ENCODE measurements at regions of chr10 and their contacts with region 1.

Region 1: GRCh38 chr10:92848441-92849233 is at the start of gene EXOC6:
- DNase-seq: peak; percentile 75 to 95 (median 85)
- ATAC-seq: peak; percentile 87
- H3K4me3 ChIP-seq: peak within 1 kb of the TSS; percentile 69
- H3K4me3 Mint-ChIP-seq: peak within 1 kb of the TSS; percentile 94
- H3K27ac ChIP-seq: peak within 1 kb of the TSS; percentile 72
- H3K27ac Mint-ChIP-seq: peak within 1 kb of the TSS; percentile 85
- H3K4me1 ChIP-seq: peaks cover 12% of the 10 kb centered on the region
- H3K4me1 Mint-ChIP-seq: peaks cover 36% of the 10 kb centered on the region
- H3K27me3 ChIP-seq: no peaks in the 10 kb centered on the region
- H3K27me3 Mint-ChIP-seq: no peaks in the 10 kb centered on the region
- CTCF ChIP-seq: no peak
- total RNA-seq, gene EXOC6: 6.6 to 7.4 TPM

Region 2: DNA sequence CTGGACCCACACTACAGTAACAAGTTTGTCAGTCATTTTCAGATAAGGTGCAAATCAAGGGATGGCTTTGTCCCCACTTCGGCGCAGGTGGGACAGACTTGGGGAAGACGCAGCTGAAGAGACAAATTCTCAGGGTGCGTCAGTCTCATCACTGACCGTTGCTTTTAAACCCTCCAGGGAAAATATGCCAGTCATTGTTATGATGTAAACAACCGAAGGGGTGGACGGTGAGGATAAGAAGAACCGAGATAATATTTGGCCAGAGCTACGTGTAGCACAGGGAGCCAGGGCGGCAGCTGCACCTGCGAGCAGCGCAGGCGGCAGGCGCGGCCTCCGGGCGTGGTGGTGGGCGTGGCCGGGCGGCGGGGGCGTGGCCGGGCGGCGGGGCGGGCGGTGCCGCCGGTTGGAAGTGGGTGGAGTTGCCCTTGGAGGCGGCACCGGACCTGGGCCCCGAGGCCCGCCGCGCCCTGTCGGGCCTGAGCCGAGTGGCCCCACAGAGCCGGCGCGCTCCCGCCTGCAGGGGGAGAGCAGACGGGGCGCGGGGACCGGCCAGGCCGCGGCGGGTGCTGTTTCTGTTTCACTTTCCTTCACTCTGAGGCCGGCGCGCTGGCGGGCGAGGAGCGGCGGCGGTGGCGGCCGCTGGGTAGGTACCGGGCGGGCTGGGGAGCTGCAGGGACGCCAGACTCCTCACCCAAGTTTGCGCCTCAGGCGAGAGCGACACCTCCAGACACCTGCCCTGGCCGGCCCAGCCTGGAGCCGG is 1628.3 kb before region 1 on chr10 and contains the start of gene PCGF5:
- CTCF ChIA-PET with region 1: no interaction called
- POLR2A ChIA-PET with region 1: no interaction called
- intact Hi-C with region 1: loop called in 1 of 2 experiments (anchors 5 kb)
- DNase-seq: peak; percentile 81 to 96 (median 91)
- ATAC-seq: peak; percentile 94
- H3K4me3 ChIP-seq: peak within 1 kb of the TSS; percentile 59
- H3K4me3 Mint-ChIP-seq: peak within 1 kb of the TSS; percentile 89
- H3K27ac ChIP-seq: peak within 1 kb of the TSS in 1 of 2 donors; percentile 65
- H3K27ac Mint-ChIP-seq: peak within 1 kb of the TSS; percentile 84
- H3K4me1 ChIP-seq: peaks cover 21% of the 10 kb centered on the region
- H3K4me1 Mint-ChIP-seq: peaks cover 44% of the 10 kb centered on the region
- H3K27me3 ChIP-seq: no peaks in the 10 kb centered on the region
- H3K27me3 Mint-ChIP-seq: no peaks in the 10 kb centered on the region
- CTCF ChIP-seq: no peak
- total RNA-seq, gene PCGF5: 57.7 to 58.4 TPM

Region 3: DNA sequence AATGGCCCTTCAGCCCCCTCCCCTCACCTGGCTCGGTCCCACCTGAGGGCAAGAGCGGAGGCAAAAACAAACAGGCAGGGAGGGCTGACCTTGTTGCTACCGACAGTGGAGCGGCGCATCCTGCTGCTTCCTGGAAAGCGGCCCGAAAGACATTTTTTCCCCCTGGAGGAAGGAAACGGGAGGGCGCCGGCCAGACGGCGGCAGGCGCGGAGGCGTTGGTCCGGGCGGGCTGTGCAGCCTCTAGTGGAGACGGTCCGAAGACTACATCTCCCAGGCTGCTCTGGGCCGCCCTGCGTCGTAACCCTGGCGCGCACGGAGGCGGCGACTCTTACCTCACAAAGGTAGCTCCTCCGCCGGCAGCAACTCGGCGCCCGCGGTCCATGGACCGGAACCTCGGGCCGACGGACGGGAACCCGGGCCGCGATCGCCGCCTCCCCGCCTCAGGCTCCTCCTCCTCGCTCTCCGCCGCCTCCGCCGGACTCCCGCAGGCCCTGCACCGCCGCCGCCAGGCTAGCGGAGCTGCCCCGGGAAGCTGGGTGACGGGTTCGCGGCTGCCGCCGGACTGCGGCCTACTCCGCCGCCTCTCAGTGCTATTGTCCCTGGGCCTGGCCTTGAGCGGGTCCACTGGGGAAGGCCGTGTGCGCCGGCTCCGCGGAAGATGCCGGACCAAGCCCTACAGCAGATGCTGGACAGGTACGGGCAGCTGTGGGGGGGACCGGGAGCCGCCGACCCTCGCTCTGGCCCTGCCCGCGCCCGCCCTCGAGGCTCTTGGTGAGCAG is 557.6 kb before region 1 on chr10 and contains the starts of genes CPEB3 and MARCHF5:
- CTCF ChIA-PET with region 1: no interaction called
- POLR2A ChIA-PET with region 1: interaction called, 6 read pairs
- intact Hi-C with region 1: loop called in 1 of 2 experiments (anchors 5 kb)
- DNase-seq: peak; percentile 80 to 97 (median 87)
- ATAC-seq: peak; percentile 97
- H3K4me3 ChIP-seq: peak within 1 kb of the TSS; percentile 97
- H3K4me3 Mint-ChIP-seq: peak within 1 kb of the TSS; percentile 97
- H3K27ac ChIP-seq: peak within 1 kb of the TSS; percentile 37 to 50
- H3K27ac Mint-ChIP-seq: peak within 1 kb of the TSS; percentile 87
- H3K4me1 ChIP-seq: peaks cover 29% of the 10 kb centered on the region
- H3K4me1 Mint-ChIP-seq: peaks cover 33% of the 10 kb centered on the region
- H3K27me3 ChIP-seq: no peaks in the 10 kb centered on the region
- H3K27me3 Mint-ChIP-seq: no peaks in the 10 kb centered on the region
- CTCF ChIP-seq: peak; percentile 44
- total RNA-seq, gene CPEB3: 1.2 to 1.3 TPM
- total RNA-seq, gene MARCHF5: 33.5 to 36.1 TPM

Region 4: DNA sequence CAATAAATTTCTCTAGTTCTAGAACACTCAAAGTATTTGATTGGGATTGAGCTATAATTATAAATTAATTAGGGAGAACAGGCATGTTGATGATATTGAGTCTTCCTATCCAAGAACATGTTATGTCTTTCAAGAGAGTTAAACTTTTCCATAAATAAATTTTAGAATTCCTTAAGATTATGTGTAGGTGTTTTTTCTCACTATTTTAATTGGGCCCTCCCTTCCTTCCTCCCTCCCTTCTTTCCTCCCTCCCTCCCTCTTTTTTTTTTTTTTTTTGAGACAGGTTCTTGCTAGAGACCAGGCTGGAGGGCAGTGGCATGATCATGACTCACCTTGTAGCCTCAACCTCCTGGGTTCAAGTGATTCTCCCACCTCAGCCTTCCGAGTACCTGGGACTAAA is 19.9 kb after region 1 on chr10:
- CTCF ChIA-PET with region 1: interaction called, 8 read pairs
- POLR2A ChIA-PET with region 1: interaction called, 11 read pairs
- intact Hi-C with region 1: loop called in 1 of 2 experiments (anchors 2 kb)
- DNase-seq: no peak
- ATAC-seq: no peak
- H3K4me3 ChIP-seq: no peak overlapping the region
- H3K4me3 Mint-ChIP-seq: no peak overlapping the region
- H3K27ac ChIP-seq: no peak overlapping the region
- H3K27ac Mint-ChIP-seq: no peak overlapping the region
- H3K4me1 ChIP-seq: no peaks in the 10 kb centered on the region
- H3K4me1 Mint-ChIP-seq: peaks cover 37% of the 10 kb centered on the region
- H3K27me3 ChIP-seq: no peaks in the 10 kb centered on the region
- H3K27me3 Mint-ChIP-seq: no peaks in the 10 kb centered on the region
- CTCF ChIP-seq: no peak

Region 5: GRCh38 chr10:92886334-92886961 is 37.8 kb after region 1 on chr10:
- CTCF ChIA-PET with region 1: interaction called, 10 read pairs
- POLR2A ChIA-PET with region 1: interaction called, 10 read pairs
- intact Hi-C with region 1: no loop called
- DNase-seq: no peak
- ATAC-seq: no peak
- H3K4me3 ChIP-seq: no peak overlapping the region
- H3K4me3 Mint-ChIP-seq: no peak overlapping the region
- H3K27ac ChIP-seq: no peak overlapping the region
- H3K27ac Mint-ChIP-seq: no peak overlapping the region
- H3K4me1 ChIP-seq: no peaks in the 10 kb centered on the region
- H3K4me1 Mint-ChIP-seq: peaks cover 14% of the 10 kb centered on the region
- H3K27me3 ChIP-seq: no peaks in the 10 kb centered on the region
- H3K27me3 Mint-ChIP-seq: no peaks in the 10 kb centered on the region
- CTCF ChIP-seq: no peak

Region 6: DNA sequence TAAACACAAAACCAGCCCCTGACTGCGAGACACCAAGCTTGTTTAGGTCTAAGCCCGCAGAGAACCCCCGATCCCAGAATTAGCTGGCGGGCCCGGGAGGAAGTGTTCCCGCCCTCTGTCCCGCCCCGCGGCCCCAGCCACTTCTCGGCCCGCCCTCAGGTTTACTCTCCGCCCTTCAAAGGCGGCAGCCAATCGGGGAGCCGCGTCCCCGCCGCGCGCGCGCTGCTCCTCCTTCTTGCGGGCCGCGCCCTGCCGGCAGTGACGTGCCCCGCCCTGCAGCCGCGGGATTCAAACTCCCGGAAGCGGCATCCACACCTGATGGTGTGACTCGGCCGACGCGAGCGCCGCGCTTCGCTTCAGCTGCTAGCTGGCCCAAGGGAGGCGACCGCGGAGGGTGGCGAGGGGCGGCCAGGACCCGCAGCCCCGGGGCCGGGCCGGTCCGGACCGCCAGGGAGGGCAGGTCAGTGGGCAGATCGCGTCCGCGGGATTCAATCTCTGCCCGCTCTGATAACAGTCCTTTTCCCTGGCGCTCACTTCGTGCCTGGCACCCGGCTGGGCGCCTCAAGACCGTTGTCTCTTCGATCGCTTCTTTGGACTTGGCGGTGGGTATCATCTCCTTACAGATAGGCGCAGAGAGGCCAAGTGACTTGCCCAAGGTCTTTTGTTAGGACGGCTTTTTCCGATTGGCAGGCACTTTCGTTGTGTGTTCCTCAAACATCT is 647.8 kb after region 1 on chr10 and contains the start of gene CEP55:
- CTCF ChIA-PET with region 1: no interaction called
- POLR2A ChIA-PET with region 1: interaction called, 5 read pairs
- intact Hi-C with region 1: loop called in 1 of 2 experiments (anchors 5 kb)
- DNase-seq: peak; percentile 89 to 97 (median 94)
- ATAC-seq: peak; percentile 99
- H3K4me3 ChIP-seq: peak within 1 kb of the TSS; percentile 95
- H3K4me3 Mint-ChIP-seq: peak within 1 kb of the TSS; percentile 95
- H3K27ac ChIP-seq: no peak within 1 kb of the TSS
- H3K27ac Mint-ChIP-seq: peak within 1 kb of the TSS; percentile 46
- H3K4me1 ChIP-seq: peaks cover 17% of the 10 kb centered on the region
- H3K4me1 Mint-ChIP-seq: peaks cover 4% of the 10 kb centered on the region
- H3K27me3 ChIP-seq: no peaks in the 10 kb centered on the region
- H3K27me3 Mint-ChIP-seq: peaks cover 5% of the 10 kb centered on the region
- CTCF ChIP-seq: no peak
- total RNA-seq, gene CEP55: 0.16 to 0.17 TPM

Region 7: GRCh38 chr10:94362360-94363250 is 1514.0 kb after region 1 on chr10 and contains the start of gene NOC3L:
- CTCF ChIA-PET with region 1: interaction called, 3 read pairs
- POLR2A ChIA-PET with region 1: no interaction called
- intact Hi-C with region 1: loop called in 1 of 2 experiments (anchors 10 kb)
- DNase-seq: peak; percentile 85 to 97 (median 92)
- ATAC-seq: peak; percentile 93
- H3K4me3 ChIP-seq: peak within 1 kb of the TSS; percentile 73
- H3K4me3 Mint-ChIP-seq: peak within 1 kb of the TSS; percentile 93
- H3K27ac ChIP-seq: peak within 1 kb of the TSS; percentile 75 to 87
- H3K27ac Mint-ChIP-seq: peak within 1 kb of the TSS; percentile 94
- H3K4me1 ChIP-seq: peaks cover 17% of the 10 kb centered on the region
- H3K4me1 Mint-ChIP-seq: peaks cover 51% of the 10 kb centered on the region
- H3K27me3 ChIP-seq: peaks cover 0 to 2% of the 10 kb centered on the region in 2 experiments
- H3K27me3 Mint-ChIP-seq: no peaks in the 10 kb centered on the region
- CTCF ChIP-seq: peak; percentile 97
- total RNA-seq, gene NOC3L: 7.1 to 8.0 TPM

Measured in CD4-positive, alpha-beta T cell (primary cell).